Cardiac septum (tissue), 1 donor: ENCODE measurements at regions of chr3 and their contacts with region 1.

Region 1: GRCh38 chr3:32045091-32045964 is 61.1 kb upstream of the GPD1L start:
- DNase-seq: no peak

Region 2: DNA sequence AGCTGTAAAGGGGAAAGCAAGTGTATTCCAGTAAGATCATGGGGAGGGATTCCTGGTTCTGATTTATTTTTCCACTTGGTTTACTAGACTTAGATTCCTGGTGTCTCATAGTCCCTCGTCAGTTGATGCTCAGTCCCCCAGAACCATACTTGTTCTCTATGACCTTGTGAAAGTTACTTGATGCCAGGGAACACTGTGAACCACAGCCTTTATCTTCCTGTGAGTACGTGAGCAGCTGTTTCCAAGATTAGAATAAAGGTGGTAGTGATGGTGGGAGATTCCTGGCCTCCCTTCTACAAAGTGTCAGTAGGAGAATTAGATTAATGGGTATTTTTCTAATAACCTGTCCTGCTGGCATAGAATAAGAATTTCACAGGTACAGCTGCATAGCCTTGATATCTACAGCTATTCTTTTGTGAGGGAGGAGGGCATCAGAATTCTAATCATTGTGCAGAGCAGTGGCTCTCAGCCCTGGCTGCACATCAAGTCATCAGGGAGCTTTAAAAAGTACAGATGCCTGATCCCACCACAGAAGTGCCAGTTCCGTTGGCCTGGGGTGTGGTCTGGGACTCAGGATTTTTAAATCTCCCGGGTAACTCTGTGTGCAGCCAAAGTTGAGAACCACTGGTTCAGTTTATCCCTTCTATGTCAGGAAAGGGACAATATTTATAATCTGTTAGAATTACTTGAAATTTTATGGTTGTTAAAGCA is 81.1 kb after region 1 on chr3:
- intact Hi-C with region 1: loop called (anchors 5 kb)
- DNase-seq: no peak

Region 3: GRCh38 chr3:32276279-32276847 is 231.0 kb after region 1 on chr3:
- intact Hi-C with region 1: no loop called
- DNase-seq: no peak